Endothelial cell of umbilical vein (primary cell): ENCODE measurements at regions of chr7 and their contacts with region 1.

Region 1: GRCh38 chr7:136009488-136010079 is 32.4 kb upstream of the MTPN start:
- DNase-seq: peak; percentile 62
- H3K4me3 ChIP-seq: no peak overlapping the region
- H3K27ac ChIP-seq: no peak overlapping the region
- H3K4me1 ChIP-seq: no peaks in the 10 kb centered on the region
- H3K27me3 ChIP-seq: peaks cover 0 to 5% of the 10 kb centered on the region in 2 experiments
- CTCF ChIP-seq: peak; percentile 29 to 40
- POLR2A ChIP-seq: no peak

Region 2: DNA sequence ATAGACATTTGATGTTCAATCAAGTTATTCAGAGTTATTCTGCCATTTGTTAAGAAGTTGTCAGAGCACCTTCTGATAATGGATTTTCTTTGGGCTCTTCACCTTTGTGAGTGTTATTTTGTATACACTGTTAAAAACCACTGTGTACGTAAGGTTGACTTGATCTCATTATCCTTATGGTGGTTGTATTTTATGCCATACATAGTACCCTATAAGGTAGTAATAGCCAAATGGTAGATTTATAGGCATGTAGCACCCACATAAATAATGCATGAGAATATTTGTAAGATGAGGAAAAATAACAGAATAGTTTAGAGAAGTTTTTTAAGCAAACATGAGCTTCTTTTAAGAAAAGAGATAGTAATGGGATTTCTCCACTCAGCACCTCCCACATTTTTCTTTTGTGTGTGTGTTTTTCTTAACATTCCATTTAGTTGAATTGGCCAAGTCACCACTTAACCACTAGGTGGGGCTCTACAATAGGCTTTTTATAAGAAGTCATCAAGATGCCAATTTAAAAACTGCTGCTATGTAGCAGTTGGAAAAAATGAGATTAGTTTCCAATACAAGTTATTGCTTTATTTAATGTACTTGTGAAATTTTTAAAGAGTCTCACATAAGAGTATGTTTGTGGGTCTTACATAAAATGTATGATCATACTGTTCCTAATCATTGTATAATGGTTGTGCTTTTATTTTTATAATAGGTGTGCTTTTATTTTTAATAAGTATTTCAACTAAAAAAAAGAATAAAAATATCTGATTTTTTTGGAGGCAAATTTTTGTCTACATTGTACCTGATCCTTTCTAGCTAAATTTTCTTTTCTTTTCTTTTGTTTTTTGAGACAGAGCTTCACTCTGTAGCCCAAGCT is 388.4 kb before region 1 on chr7:
- CTCF ChIA-PET with region 1: no interaction called
- POLR2A ChIA-PET with region 1: no interaction called
- dilution Hi-C with region 1: no loop called
- intact Hi-C with region 1: loop called (anchors 1 kb)
- DNase-seq: peak; percentile 82
- H3K4me3 ChIP-seq: no peak overlapping the region
- H3K27ac ChIP-seq: no peak overlapping the region
- H3K4me1 ChIP-seq: no peaks in the 10 kb centered on the region
- H3K27me3 ChIP-seq: no peaks in the 10 kb centered on the region
- CTCF ChIP-seq: peak; percentile 64 to 69
- POLR2A ChIP-seq: no peak

Region 3: GRCh38 chr7:135662373-135663114 is 347.0 kb before region 1 on chr7 and contains the start of gene STMP1:
- CTCF ChIA-PET with region 1: no interaction called
- POLR2A ChIA-PET with region 1: no interaction called
- dilution Hi-C with region 1: no loop called
- intact Hi-C with region 1: loop called (anchors 1 kb)
- DNase-seq: peak; percentile 95
- H3K4me3 ChIP-seq: peak within 1 kb of the TSS; percentile 68 to 91 (median 86)
- H3K27ac ChIP-seq: peak within 1 kb of the TSS; percentile 91
- H3K4me1 ChIP-seq: peaks cover 36% of the 10 kb centered on the region
- H3K27me3 ChIP-seq: no peaks in the 10 kb centered on the region
- CTCF ChIP-seq: peak in 1 of 2 donors; percentile 77
- POLR2A ChIP-seq: peak; percentile 96
- total RNA-seq, gene STMP1: 21.4 and 31.3 TPM in 2 replicates

Region 4: GRCh38 chr7:136652635-136653370 is 643.2 kb after region 1 on chr7:
- CTCF ChIA-PET with region 1: no interaction called
- POLR2A ChIA-PET with region 1: no interaction called
- dilution Hi-C with region 1: no loop called
- intact Hi-C with region 1: no loop called
- DNase-seq: no peak
- H3K4me3 ChIP-seq: no peak overlapping the region
- H3K27ac ChIP-seq: no peak overlapping the region
- H3K4me1 ChIP-seq: no peaks in the 10 kb centered on the region
- H3K27me3 ChIP-seq: no peaks in the 10 kb centered on the region
- CTCF ChIP-seq: no peak
- POLR2A ChIP-seq: no peak